Activated B cell treated with CpG ODN at 0.5 μM for 24 hours (primary cell): ENCODE measurements at regions of chr11 and their contacts with region 1.

Region 1: GRCh38 chr11:58567889-58568512 is 7.7 kb downstream of the LPXN start:
- DNase-seq: peak; percentile 54
- ATAC-seq: peak; percentile 99
- H3K4me3 Mint-ChIP-seq: no peak overlapping the region
- H3K27ac Mint-ChIP-seq: peak overlapping the region; percentile 36
- H3K4me1 Mint-ChIP-seq: peaks cover 40% of the 10 kb centered on the region
- H3K27me3 Mint-ChIP-seq: no peaks in the 10 kb centered on the region
- CTCF ChIP-seq: peak; percentile 53

Region 2: GRCh38 chr11:58549644-58550043 is 18.4 kb before region 1 on chr11:
- CTCF ChIA-PET with region 1: interaction called, 16 read pairs
- POLR2A ChIA-PET with region 1: interaction called, 3 read pairs
- intact Hi-C with region 1: no loop called
- DNase-seq: no peak
- ATAC-seq: no peak
- H3K4me3 Mint-ChIP-seq: no peak overlapping the region
- H3K27ac Mint-ChIP-seq: no peak overlapping the region
- H3K4me1 Mint-ChIP-seq: no peaks in the 10 kb centered on the region
- H3K27me3 Mint-ChIP-seq: no peaks in the 10 kb centered on the region
- CTCF ChIP-seq: no peak

Region 3: DNA sequence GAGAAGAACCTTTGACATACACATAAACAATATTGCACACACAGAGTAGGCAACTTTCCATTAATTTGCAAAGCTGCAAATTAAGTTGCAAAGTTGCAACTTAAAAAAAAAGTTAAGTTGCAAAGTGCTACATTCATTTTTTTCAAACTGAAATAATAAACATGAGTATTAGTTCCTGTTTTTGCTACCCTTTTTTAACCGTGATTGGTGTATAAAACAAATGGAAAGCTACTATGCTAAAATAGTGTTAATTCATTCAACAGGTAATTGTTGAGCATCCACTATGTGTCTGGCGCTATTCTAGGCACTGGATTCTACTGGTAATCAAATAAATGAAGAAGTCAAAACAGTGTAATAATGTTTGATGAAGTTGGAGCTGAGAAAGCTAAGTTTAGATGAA is 19.0 kb after region 1 on chr11:
- CTCF ChIA-PET with region 1: interaction called, 19 read pairs
- POLR2A ChIA-PET with region 1: interaction called, 11 read pairs
- intact Hi-C with region 1: no loop called
- DNase-seq: no peak
- ATAC-seq: peak; percentile 34
- H3K4me3 Mint-ChIP-seq: peak overlapping the region; percentile 12
- H3K27ac Mint-ChIP-seq: peak overlapping the region; percentile 38
- H3K4me1 Mint-ChIP-seq: peaks cover 49% of the 10 kb centered on the region
- H3K27me3 Mint-ChIP-seq: no peaks in the 10 kb centered on the region
- CTCF ChIP-seq: no peak

Region 4: GRCh38 chr11:58609723-58610122 is 41.7 kb after region 1 on chr11:
- CTCF ChIA-PET with region 1: interaction called, 16 read pairs
- POLR2A ChIA-PET with region 1: interaction called, 35 read pairs
- intact Hi-C with region 1: no loop called
- DNase-seq: no peak
- ATAC-seq: no peak
- H3K4me3 Mint-ChIP-seq: no peak overlapping the region
- H3K27ac Mint-ChIP-seq: peak overlapping the region; percentile 53
- H3K4me1 Mint-ChIP-seq: peaks cover 40% of the 10 kb centered on the region
- H3K27me3 Mint-ChIP-seq: no peaks in the 10 kb centered on the region
- CTCF ChIP-seq: no peak

Region 5: GRCh38 chr11:58617976-58618557 is 50.1 kb after region 1 on chr11:
- CTCF ChIA-PET with region 1: interaction called, 7 read pairs
- POLR2A ChIA-PET with region 1: interaction called, 7 read pairs
- intact Hi-C with region 1: loop called (anchors 2 kb)
- DNase-seq: no peak
- ATAC-seq: no peak
- H3K4me3 Mint-ChIP-seq: no peak overlapping the region
- H3K27ac Mint-ChIP-seq: no peak overlapping the region
- H3K4me1 Mint-ChIP-seq: peaks cover 3% of the 10 kb centered on the region
- H3K27me3 Mint-ChIP-seq: no peaks in the 10 kb centered on the region
- CTCF ChIP-seq: no peak

Region 6: DNA sequence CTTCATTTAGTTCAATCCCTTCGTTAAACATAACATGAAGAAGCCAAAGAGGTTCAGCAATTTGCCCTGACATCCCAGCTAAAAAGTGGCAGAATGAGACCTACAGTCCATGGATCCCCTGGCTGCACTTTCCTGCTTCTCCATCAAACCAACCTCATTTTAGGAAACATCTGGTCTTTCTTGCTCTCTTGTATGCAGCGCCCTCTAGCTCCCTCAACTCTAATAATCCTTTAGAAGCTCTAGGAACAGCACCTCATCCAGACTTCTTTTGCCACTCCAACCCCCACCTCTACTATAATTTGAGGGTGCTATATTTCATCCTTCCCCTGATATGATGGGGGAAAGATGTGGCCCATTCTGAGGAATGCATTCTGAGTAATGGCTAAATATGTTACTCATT is 61.9 kb after region 1 on chr11:
- CTCF ChIA-PET with region 1: interaction called, 63 read pairs
- POLR2A ChIA-PET with region 1: interaction called, 9 read pairs
- intact Hi-C with region 1: loop called (anchors 1 kb)
- DNase-seq: no peak
- ATAC-seq: no peak
- H3K4me3 Mint-ChIP-seq: no peak overlapping the region
- H3K27ac Mint-ChIP-seq: no peak overlapping the region
- H3K4me1 Mint-ChIP-seq: peaks cover 22% of the 10 kb centered on the region
- H3K27me3 Mint-ChIP-seq: no peaks in the 10 kb centered on the region
- CTCF ChIP-seq: no peak

Region 7: DNA sequence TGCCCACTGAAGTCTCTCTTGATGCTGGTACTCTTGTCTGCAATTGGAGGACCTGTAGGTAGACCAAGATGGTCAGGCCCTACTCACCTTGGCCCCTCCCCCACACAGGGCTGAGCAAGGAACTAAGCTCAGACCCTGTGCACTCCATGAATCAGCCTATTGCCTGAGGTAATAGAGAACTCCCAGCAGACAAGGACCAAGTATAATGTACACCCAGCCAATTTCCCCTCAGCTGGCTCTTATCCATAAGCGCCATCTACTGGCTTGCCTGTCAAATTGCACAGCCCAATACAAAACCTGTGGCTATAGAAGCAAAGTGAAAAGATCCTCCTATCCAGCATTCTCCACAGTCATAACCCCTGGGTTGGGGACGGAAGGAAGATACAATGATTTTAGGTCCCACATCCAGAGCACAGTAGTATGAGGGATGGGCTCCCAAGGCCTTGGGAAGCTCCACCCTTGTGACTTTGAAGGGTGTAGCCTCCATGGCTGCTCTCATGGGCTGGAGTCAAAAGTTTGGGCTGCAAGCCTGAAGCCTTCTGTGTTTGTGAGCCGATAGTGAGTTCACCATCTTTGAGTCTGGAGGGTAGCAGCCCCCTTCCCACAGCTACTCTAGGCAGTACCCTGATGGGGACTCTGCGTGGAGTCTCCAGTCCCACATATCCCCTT is 220.5 kb after region 1 on chr11:
- CTCF ChIA-PET with region 1: no interaction called
- POLR2A ChIA-PET with region 1: no interaction called
- intact Hi-C with region 1: loop called (anchors 1 kb)
- DNase-seq: no peak
- ATAC-seq: peak; percentile 73
- H3K4me3 Mint-ChIP-seq: no peak overlapping the region
- H3K27ac Mint-ChIP-seq: no peak overlapping the region
- H3K4me1 Mint-ChIP-seq: no peaks in the 10 kb centered on the region
- H3K27me3 Mint-ChIP-seq: peaks cover 3% of the 10 kb centered on the region
- CTCF ChIP-seq: no peak